Right cardiac atrium (tissue), 5 donors: ENCODE measurements at regions of chr2 and their contacts with region 1.

Region 1: GRCh38 chr2:74919827-74920226 is 38.6 kb upstream of the POLE4 start:
- DNase-seq: peak; percentile 55 to 84 (median 81)
- ATAC-seq: peak; percentile 35 to 64
- H3K4me3 ChIP-seq: peak overlapping the region; percentile 11
- H3K27ac ChIP-seq: no peak overlapping the region
- H3K4me1 ChIP-seq: no peaks in the 10 kb centered on the region
- H3K27me3 ChIP-seq: no peaks in the 10 kb centered on the region

Region 2: GRCh38 chr2:75064691-75065396 is 145.0 kb after region 1 on chr2:
- intact Hi-C with region 1: loop called in 1 of 4 experiments (anchors 5 kb)
- DNase-seq: peak; percentile 44 to 81 (median 60)
- ATAC-seq: peak in 1 of 2 donors; percentile 50
- H3K4me3 ChIP-seq: no peak overlapping the region
- H3K27ac ChIP-seq: no peak overlapping the region
- H3K4me1 ChIP-seq: no peaks in the 10 kb centered on the region
- H3K27me3 ChIP-seq: no peaks in the 10 kb centered on the region

Region 3: DNA sequence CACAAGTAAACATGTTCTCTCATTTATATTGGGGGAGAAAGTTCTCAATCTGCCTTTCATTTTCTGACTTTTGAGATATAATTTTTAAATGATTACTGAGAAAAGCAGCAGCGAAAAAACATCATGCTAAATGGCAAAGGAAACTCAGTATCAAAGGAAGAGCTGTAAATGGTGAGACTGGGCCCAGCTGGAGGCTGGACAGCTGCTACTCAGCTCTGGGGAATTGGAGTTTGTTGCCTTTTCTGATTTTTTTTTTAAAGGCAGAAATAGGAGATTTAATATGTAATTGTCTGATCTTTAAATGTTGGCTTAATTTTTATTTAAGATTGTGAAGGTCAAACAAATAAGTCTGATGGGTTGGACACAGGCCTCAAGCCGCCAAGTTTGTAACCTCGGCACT is 416.6 kb after region 1 on chr2:
- intact Hi-C with region 1: loop called in 1 of 4 experiments (anchors 5 kb)
- DNase-seq: no peak
- ATAC-seq: no peak
- H3K4me3 ChIP-seq: no peak overlapping the region
- H3K27ac ChIP-seq: no peak overlapping the region
- H3K4me1 ChIP-seq: no peaks in the 10 kb centered on the region
- H3K27me3 ChIP-seq: no peaks in the 10 kb centered on the region

Region 4: DNA sequence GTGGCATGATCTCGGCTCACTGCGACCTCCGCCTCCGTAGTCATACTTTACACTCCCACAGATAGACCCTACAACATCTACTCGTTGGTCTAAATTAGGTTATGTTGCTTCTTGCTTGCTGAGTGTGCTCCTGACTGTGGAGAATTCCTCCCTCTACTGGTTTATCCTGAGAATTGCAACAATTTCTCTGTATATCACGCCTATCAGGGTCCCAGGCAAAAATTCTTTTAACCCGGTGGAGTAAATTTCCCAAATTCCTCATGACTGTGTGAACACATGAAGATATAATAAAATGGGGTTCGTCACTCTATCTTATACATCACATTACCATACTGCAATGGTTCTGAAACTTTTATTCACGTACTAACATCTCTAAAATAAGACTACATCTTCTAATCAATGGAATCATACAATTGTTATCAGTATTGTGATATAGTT is 484.2 kb after region 1 on chr2:
- intact Hi-C with region 1: loop called in 3 of 4 experiments (anchors 5 kb)
- DNase-seq: no peak
- ATAC-seq: peak; percentile 55 to 72
- H3K4me3 ChIP-seq: no peak overlapping the region
- H3K27ac ChIP-seq: no peak overlapping the region
- H3K4me1 ChIP-seq: no peaks in the 10 kb centered on the region
- H3K27me3 ChIP-seq: no peaks in the 10 kb centered on the region

Region 5: DNA sequence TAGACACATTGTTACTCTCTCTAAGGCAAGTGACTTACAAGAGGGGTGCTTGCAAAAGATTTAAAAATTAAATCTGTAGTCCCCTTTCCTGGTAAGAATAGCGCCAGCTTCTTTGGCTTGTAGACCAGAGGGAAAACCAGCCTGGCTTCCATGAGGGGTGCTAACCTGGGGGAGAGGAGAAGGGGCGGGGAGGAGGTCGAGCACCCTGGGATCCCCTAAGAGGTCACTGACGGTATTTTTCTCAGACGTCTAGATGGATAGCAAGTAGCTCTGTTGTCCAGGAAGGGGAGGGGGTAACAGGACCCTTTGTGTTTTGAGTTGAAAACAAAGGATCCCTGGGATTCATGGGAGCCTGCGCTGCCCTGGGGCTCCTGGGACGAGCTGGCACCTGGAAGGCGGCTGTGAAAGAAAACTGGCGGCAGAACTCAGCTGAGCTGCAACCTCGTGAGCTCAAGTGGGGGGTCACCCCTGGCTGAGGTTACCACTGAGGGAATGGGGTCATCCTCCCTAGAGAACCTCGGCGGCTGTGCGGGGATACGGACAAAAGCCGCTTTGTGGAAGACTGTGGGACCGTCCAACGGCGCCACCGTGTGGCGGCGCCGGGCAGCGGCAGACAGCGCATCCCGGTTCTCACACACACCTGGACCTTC is 689.0 kb after region 1 on chr2:
- intact Hi-C with region 1: loop called in 2 of 4 experiments (anchors 5 to 10 kb)
- DNase-seq: peak; percentile 46 to 76 (median 75)
- ATAC-seq: peak; percentile 76 to 81
- H3K4me3 ChIP-seq: no peak overlapping the region
- H3K27ac ChIP-seq: no peak overlapping the region
- H3K4me1 ChIP-seq: no peaks in the 10 kb centered on the region
- H3K27me3 ChIP-seq: no peaks in the 10 kb centered on the region

Region 6: GRCh38 chr2:75614056-75614710 is 694.4 kb after region 1 on chr2:
- intact Hi-C with region 1: loop called in 2 of 4 experiments (anchors 5 to 10 kb)
- DNase-seq: no peak
- ATAC-seq: no peak
- H3K4me3 ChIP-seq: no peak overlapping the region
- H3K27ac ChIP-seq: no peak overlapping the region
- H3K4me1 ChIP-seq: no peaks in the 10 kb centered on the region
- H3K27me3 ChIP-seq: no peaks in the 10 kb centered on the region